H1 (cell line): ENCODE measurements at regions of chr7 and their contacts with region 1.

Region 1: DNA sequence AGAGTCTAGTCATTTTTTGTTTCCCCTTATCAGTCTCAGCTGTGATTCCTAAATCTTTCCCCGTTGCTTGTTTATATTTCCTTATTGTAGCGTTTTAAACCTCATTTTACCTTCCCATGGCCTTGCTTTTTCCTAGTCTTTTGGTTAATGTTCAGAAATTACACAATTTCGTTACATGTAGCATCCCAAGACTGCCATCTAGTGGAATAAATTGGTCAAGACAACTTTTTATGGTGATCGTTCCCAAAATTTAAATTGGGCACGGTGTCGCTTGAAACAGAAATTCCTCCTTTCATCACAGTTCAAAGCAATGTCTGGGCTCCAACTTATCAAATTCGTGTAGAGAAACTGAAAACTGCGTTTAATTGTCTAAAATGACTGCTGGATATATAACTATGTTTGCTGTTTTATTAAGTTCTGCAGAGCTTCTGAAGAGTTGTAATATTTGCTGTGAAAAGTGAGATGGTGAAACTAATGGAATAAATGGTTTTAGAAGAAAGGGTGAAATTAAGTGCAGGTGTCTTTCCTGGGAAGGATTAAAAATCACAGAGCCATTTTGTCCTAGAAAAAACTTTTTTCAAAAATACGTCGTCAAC is 370.2 kb downstream of the PHF14 start:
- DNase-seq: no peak
- H3K4me3 ChIP-seq: no peak overlapping the region
- H3K27ac ChIP-seq: no peak overlapping the region
- H3K4me1 ChIP-seq: peaks cover 0 to 5% (median 2%) of the 10 kb centered on the region in 4 experiments; a peak in 2 of 7 replicates
- H3K27me3 ChIP-seq: peaks cover 0 to 2% (median 0%) of the 10 kb centered on the region in 4 experiments; a peak in 1 of 7 replicates
- CTCF ChIP-seq: peak in 2 of 3 experiments; percentile 38 to 68; a peak in 2 of 4 replicates
- EP300 ChIP-seq: no peak
- POLR2A ChIP-seq: no peak
- RAD21 ChIP-seq: peak; percentile 84 to 89

Region 2: DNA sequence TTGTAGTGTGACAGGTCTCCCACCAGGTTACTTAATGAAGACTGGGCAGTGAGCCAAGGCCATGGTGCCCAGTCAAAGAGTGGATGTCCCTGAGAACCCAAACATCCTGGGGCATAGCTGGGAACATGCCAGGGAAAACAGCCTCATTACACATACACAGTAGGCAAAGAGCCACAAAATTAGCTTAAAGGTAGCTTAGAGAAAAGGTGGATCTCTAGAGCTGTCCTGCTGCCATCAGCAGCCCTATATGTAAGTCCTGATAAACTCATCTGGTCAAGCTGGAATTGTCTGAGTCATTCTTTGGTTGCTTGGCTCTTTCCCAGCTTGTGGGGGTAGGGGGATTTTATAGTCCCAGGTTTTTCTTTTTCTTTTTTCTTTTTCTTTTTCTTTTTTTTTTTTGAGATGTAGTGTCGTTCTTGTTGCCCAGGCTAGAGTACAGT is 82.4 kb before region 1 on chr7:
- CTCF ChIA-PET with region 1: no interaction called
- POLR2A ChIA-PET with region 1: no interaction called
- DNase-seq: no peak
- H3K4me3 ChIP-seq: no peak overlapping the region
- H3K27ac ChIP-seq: no peak overlapping the region
- H3K4me1 ChIP-seq: no peaks in the 10 kb centered on the region
- H3K27me3 ChIP-seq: no peaks in the 10 kb centered on the region
- CTCF ChIP-seq: no peak
- EP300 ChIP-seq: no peak
- POLR2A ChIP-seq: no peak
- RAD21 ChIP-seq: no peak

Region 3: GRCh38 chr7:11332186-11332864 is 11.6 kb before region 1 on chr7:
- CTCF ChIA-PET with region 1: interaction called, 20 read pairs
- POLR2A ChIA-PET with region 1: no interaction called
- DNase-seq: no peak
- H3K4me3 ChIP-seq: no peak overlapping the region
- H3K27ac ChIP-seq: no peak overlapping the region
- H3K4me1 ChIP-seq: peaks cover 0 to 5% (median 2%) of the 10 kb centered on the region in 4 experiments; a peak in 4 of 7 replicates
- H3K27me3 ChIP-seq: no peaks in the 10 kb centered on the region
- CTCF ChIP-seq: no peak
- EP300 ChIP-seq: no peak
- POLR2A ChIP-seq: no peak
- RAD21 ChIP-seq: no peak

Region 4: DNA sequence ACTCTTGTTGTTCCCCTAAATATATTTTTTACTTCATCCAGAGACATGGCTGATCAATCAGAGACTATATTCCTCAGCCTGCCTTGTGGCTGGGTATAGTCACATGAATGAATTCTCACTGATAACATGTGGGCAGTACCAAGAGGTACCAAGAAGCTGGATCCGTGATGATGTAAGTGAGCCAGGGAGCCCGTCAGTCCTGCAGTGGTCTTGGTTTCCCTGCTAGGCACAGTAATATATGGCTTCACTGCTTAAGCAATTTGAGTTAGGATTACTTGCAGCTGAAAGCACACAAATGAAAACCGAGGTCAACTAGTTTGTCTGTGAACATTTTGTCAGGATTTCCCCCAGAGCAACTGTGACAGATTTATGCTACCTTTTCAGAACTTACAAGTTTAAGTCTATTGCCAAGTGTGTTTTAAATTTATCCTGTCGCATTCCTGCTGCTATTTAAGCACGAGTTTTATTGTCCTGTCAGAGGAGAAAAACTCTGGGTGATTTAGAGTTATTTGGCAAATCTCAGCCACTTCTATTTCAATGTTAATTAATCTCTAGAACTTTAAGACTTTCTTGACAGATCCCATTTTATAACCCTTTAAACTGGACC is 11.6 kb after region 1 on chr7:
- CTCF ChIA-PET with region 1: interaction called, 14 read pairs
- POLR2A ChIA-PET with region 1: no interaction called
- DNase-seq: no peak
- H3K4me3 ChIP-seq: no peak overlapping the region
- H3K27ac ChIP-seq: no peak overlapping the region
- H3K4me1 ChIP-seq: no peaks in the 10 kb centered on the region
- H3K27me3 ChIP-seq: no peaks in the 10 kb centered on the region
- CTCF ChIP-seq: no peak
- EP300 ChIP-seq: no peak
- POLR2A ChIP-seq: no peak
- RAD21 ChIP-seq: no peak

Region 5: DNA sequence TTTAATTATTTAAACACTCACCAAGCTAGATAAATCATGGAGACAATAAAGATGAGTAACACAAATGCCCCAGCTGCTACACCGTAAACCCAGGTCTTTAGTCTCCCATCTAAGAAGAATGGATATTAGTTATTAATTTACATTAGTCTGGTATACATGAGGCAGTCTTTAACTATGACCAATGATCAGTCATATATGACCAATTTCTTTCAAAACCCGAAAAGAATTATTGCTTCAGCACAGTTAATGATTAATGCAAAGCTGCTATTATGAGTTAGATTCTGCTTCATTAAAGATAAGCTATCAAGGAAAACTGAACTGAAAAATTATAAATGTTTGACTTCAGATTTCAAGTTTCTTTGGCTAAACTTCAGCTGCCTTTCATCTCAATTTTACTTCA is 32.6 kb after region 1 on chr7:
- CTCF ChIA-PET with region 1: no interaction called
- POLR2A ChIA-PET with region 1: no interaction called
- DNase-seq: no peak
- H3K4me3 ChIP-seq: no peak overlapping the region
- H3K27ac ChIP-seq: no peak overlapping the region
- H3K4me1 ChIP-seq: no peaks in the 10 kb centered on the region
- H3K27me3 ChIP-seq: no peaks in the 10 kb centered on the region
- CTCF ChIP-seq: no peak
- EP300 ChIP-seq: no peak
- POLR2A ChIP-seq: no peak
- RAD21 ChIP-seq: no peak